Naive thymus-derived CD4-positive, alpha-beta T cell (primary cell): ENCODE measurements at regions of chr2 and their contacts with region 1.

Region 1: DNA sequence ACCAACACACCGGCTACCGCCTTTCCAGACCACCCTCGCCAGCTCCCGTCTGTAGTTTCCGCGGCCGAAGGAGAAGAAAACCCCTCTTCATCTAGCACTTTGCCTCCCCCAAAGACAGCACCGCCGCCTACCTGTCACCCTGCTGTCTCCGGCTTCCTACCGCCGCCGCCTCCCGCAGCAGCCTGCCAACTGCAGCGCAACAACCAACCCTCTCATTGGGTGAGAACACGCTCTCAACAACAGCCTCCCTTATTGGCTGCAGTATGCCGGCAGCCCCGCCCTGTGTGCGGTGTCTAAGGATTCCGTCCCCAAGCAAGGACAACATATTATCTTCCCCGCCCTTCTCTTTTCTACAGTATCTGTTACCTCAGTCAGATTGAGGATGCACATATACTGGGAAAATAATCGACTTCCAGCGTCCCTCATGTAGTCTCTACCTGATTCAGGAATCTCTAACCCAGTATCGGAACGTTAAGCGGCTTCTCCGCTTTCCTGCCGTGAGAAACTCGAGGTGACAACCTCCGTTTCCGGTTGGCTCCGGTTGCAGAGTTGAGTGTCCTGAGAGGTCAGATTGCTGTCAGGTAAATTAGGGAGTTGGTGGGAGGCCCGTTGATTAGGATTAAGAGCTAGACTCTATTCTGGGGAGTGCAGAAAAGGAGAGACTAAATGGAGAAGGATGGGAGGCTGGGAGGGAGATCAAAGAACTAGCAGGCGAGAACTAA is at the starts of genes HYCC2 and NDUFB3:
- DNase-seq: peak; percentile 79 to 96 (median 95)
- ATAC-seq: peak; percentile 98
- H3K4me3 ChIP-seq: peak within 1 kb of the TSS; percentile 92
- H3K4me3 Mint-ChIP-seq: peak within 1 kb of the TSS; percentile 91 to 99 (median 94)
- H3K27ac ChIP-seq: peak within 1 kb of the TSS; percentile 83
- H3K27ac Mint-ChIP-seq: peak within 1 kb of the TSS; percentile 86 to 99 (median 95)
- H3K4me1 ChIP-seq: peaks cover 32 to 36% of the 10 kb centered on the region in 2 donors
- H3K4me1 Mint-ChIP-seq: peaks cover 31 to 74% (median 55%) of the 10 kb centered on the region in 7 donors
- H3K27me3 ChIP-seq: no peaks in the 10 kb centered on the region
- H3K27me3 Mint-ChIP-seq: no peaks in the 10 kb centered on the region
- total RNA-seq, gene HYCC2: 34.8 to 38.3 (median 36.1) TPM
- total RNA-seq, gene NDUFB3: 18.3 to 109 (median 38.3) TPM

Region 2: GRCh38 chr2:199955339-199956261 is 1116.0 kb before region 1 on chr2 and contains the starts of genes MAIP1 and TYW5:
- CTCF ChIA-PET with region 1: no interaction called
- POLR2A ChIA-PET with region 1: no interaction called
- intact Hi-C with region 1: loop called in 1 of 2 experiments (anchors 2 kb)
- DNase-seq: peak; percentile 69 to 85 (median 79)
- ATAC-seq: peak; percentile 93
- H3K4me3 ChIP-seq: peak within 1 kb of the TSS; percentile 95
- H3K4me3 Mint-ChIP-seq: peak within 1 kb of the TSS; percentile 96 to 99 (median 98)
- H3K27ac ChIP-seq: peak within 1 kb of the TSS; percentile 84
- H3K27ac Mint-ChIP-seq: peak within 1 kb of the TSS; percentile 93 to 98 (median 95)
- H3K4me1 ChIP-seq: peaks cover 27 to 34% of the 10 kb centered on the region in 2 donors
- H3K4me1 Mint-ChIP-seq: peaks cover 31 to 72% (median 59%) of the 10 kb centered on the region in 7 donors
- H3K27me3 ChIP-seq: no peaks in the 10 kb centered on the region
- H3K27me3 Mint-ChIP-seq: no peaks in the 10 kb centered on the region
- total RNA-seq, gene MAIP1: 14.5 to 27.8 (median 19.8) TPM
- total RNA-seq, gene TYW5: 6.3 to 13.3 (median 11.2) TPM

Region 3: GRCh38 chr2:200247494-200247893 is 824.1 kb before region 1 on chr2:
- CTCF ChIA-PET with region 1: no interaction called
- POLR2A ChIA-PET with region 1: no interaction called
- intact Hi-C with region 1: no loop called
- DNase-seq: no peak
- ATAC-seq: no peak
- H3K4me3 ChIP-seq: no peak overlapping the region
- H3K4me3 Mint-ChIP-seq: no peak overlapping the region
- H3K27ac ChIP-seq: no peak overlapping the region
- H3K27ac Mint-ChIP-seq: no peak overlapping the region
- H3K4me1 ChIP-seq: no peaks in the 10 kb centered on the region
- H3K4me1 Mint-ChIP-seq: peaks cover 0 to 5% (median 0%) of the 10 kb centered on the region in 7 donors
- H3K27me3 ChIP-seq: no peaks in the 10 kb centered on the region
- H3K27me3 Mint-ChIP-seq: peaks cover 0 to 42% (median 4%) of the 10 kb centered on the region in 5 donors

Region 4: DNA sequence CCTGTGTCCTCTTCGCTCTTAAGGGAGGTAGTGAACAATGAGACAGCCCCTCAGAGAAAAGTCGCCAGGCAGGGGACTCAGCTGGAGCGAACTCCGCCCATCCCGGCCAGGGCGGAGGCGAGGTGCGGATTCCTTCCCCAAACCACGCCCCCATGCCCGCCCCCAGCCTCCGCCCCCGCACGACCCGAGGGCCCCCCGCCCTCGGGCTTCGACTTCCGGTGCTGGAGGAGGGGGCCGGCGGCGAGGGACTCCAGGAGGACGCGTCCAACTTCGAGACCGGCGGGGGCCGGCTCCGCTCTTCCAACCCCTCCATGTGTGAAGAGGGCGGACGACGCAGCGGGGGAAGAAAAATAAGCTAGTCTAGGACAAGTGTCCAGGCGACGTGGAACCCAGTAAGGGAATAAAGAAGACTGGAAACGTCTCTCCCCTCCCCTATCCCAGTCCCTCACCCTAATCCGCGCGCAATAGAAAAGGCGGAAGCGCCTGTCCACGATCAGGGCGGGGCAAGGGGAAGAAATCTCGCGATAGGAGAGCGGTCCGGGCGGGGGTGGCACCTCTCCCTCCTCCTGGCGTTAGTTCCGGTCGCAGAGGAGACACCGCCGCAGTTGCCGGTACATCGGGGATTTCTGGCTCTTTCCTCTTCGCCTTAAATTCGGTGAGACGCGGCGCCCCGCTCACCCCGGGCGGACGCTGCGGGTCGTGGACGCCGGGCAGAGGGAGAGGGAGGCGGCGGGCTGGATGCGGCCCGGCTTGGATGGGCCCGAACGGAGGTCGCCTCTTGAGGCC is 260.1 kb before region 1 on chr2 and contains the start of gene BZW1:
- CTCF ChIA-PET with region 1: no interaction called
- POLR2A ChIA-PET with region 1: interaction called, 4 read pairs
- intact Hi-C with region 1: loop called (anchors 1 kb)
- DNase-seq: peak; percentile 92 to 99 (median 98)
- ATAC-seq: peak; percentile 91
- H3K4me3 ChIP-seq: peak within 1 kb of the TSS; percentile 89
- H3K4me3 Mint-ChIP-seq: peak within 1 kb of the TSS; percentile 89 to 99 (median 98)
- H3K27ac ChIP-seq: peak within 1 kb of the TSS; percentile 99
- H3K27ac Mint-ChIP-seq: peak within 1 kb of the TSS; percentile 91 to 99 (median 98)
- H3K4me1 ChIP-seq: peaks cover 19 to 24% of the 10 kb centered on the region in 2 donors
- H3K4me1 Mint-ChIP-seq: peaks cover 30 to 56% (median 48%) of the 10 kb centered on the region in 7 donors
- H3K27me3 ChIP-seq: no peaks in the 10 kb centered on the region
- H3K27me3 Mint-ChIP-seq: peaks cover 0 to 2% (median 0%) of the 10 kb centered on the region in 5 donors
- total RNA-seq, gene BZW1: 127 to 246 (median 207) TPM

Region 5: DNA sequence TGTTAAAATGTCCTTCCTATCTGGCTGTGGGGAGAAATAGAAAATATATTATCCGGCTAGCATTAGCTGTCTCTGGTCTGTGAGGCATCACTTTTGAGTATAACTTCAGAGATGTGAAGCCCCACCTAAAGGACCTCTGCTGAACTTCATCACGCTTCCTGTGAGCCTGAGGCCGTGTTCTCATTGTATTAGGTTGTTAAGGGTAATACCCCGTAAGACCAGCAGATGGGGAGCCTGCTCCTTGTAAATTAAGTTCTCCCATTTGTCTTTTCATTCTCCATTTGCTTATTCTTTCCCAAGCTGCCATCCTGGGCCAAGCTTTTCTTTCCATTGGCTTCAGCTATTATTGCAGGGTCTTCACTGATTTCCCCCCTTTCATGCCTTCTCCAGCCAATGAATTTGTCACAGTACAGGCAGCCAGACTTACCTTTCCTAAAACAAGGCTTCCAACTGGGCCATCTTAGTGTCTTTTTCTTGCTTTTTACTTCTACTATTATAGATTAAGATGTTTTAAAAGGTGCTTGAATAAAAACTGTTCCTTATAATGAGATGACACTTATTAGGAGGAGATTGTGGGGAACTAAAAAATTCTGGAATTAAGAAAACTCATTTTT is 170.1 kb before region 1 on chr2:
- CTCF ChIA-PET with region 1: interaction called, 43 read pairs
- POLR2A ChIA-PET with region 1: interaction called, 7 read pairs
- intact Hi-C with region 1: loop called (anchors 1 kb)
- DNase-seq: peak; percentile 18 to 83 (median 76)
- ATAC-seq: peak; percentile 100
- H3K4me3 ChIP-seq: no peak overlapping the region
- H3K4me3 Mint-ChIP-seq: no peak overlapping the region
- H3K27ac ChIP-seq: no peak overlapping the region
- H3K27ac Mint-ChIP-seq: peak overlapping the region; percentile 4 to 86 (median 44)
- H3K4me1 ChIP-seq: no peaks in the 10 kb centered on the region
- H3K4me1 Mint-ChIP-seq: peaks cover 0 to 27% (median 6%) of the 10 kb centered on the region in 7 donors
- H3K27me3 ChIP-seq: no peaks in the 10 kb centered on the region
- H3K27me3 Mint-ChIP-seq: no peaks in the 10 kb centered on the region

Region 6: GRCh38 chr2:201642579-201643215 is 571.1 kb after region 1 on chr2:
- CTCF ChIA-PET with region 1: no interaction called
- POLR2A ChIA-PET with region 1: no interaction called
- intact Hi-C with region 1: loop called (anchors 1 kb)
- DNase-seq: peak; percentile 81 to 94 (median 92)
- ATAC-seq: peak; percentile 94
- H3K4me3 ChIP-seq: peak overlapping the region; percentile 95
- H3K4me3 Mint-ChIP-seq: peak overlapping the region; percentile 86 to 99 (median 96)
- H3K27ac ChIP-seq: peak overlapping the region; percentile 87
- H3K27ac Mint-ChIP-seq: peak overlapping the region; percentile 76 to 100 (median 97)
- H3K4me1 ChIP-seq: peaks cover 3 to 5% of the 10 kb centered on the region in 2 donors
- H3K4me1 Mint-ChIP-seq: peaks cover 5 to 21% (median 12%) of the 10 kb centered on the region in 7 donors
- H3K27me3 ChIP-seq: no peaks in the 10 kb centered on the region
- H3K27me3 Mint-ChIP-seq: peaks cover 0 to 4% (median 0%) of the 10 kb centered on the region in 5 donors